ENCODE measurements at regions of chr11 and their contacts with region 1.

Region 1: GRCh38 chr11:29963796-29964195 is 53.0 kb downstream of the KCNA4 start:
- DNase-seq: no peak
- ATAC-seq: no peak
- H3K4me3 ChIP-seq: no peak overlapping the region
- H3K4me3 Mint-ChIP-seq: no peak overlapping the region
- H3K27ac ChIP-seq: no peak overlapping the region
- H3K27ac Mint-ChIP-seq: no peak overlapping the region
- H3K4me1 ChIP-seq: no peaks in the 10 kb centered on the region
- H3K4me1 Mint-ChIP-seq: no peaks in the 10 kb centered on the region
- H3K27me3 ChIP-seq: no peaks in the 10 kb centered on the region
- H3K27me3 Mint-ChIP-seq: no peaks in the 10 kb centered on the region

Region 2: DNA sequence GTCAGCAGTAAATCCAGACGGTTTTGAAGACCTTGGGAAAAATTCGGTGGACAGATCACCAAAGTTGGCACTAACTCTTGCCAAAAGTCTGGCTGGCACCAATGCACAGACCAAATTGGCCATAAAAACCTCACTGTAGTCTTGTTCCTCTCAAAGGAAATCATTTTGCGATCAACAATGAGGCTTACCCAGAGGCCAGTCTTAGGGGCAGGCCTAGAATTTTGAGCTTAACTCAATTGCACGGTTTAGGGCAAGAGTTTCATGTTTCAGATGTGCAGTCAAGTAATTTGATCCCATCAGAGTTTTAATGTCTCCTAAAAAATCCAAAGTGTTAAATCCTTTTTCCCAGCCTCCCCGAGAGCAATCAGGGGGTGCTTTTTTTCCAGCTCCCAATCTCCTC is 603.3 kb after region 1 on chr11:
- CTCF ChIA-PET with region 1: no interaction called
- POLR2A ChIA-PET with region 1: interaction called in 1 of 2 experiments, 11 read pairs
- DNase-seq: no peak
- ATAC-seq: no peak
- H3K4me3 ChIP-seq: no peak overlapping the region
- H3K4me3 Mint-ChIP-seq: no peak overlapping the region
- H3K27ac ChIP-seq: no peak overlapping the region
- H3K27ac Mint-ChIP-seq: no peak overlapping the region
- H3K4me1 ChIP-seq: no peaks in the 10 kb centered on the region
- H3K4me1 Mint-ChIP-seq: no peaks in the 10 kb centered on the region
- H3K27me3 ChIP-seq: no peaks in the 10 kb centered on the region
- H3K27me3 Mint-ChIP-seq: no peaks in the 10 kb centered on the region

Measured in T-cell (primary cell).